Common myeloid progenitor, CD34-positive (primary cell): ENCODE measurements at regions of chr10 and their contacts with region 1.

Region 1: GRCh38 chr10:33115738-33116719 is 158.0 kb upstream of the ITGB1 start:
- DNase-seq: peak in 2 of 3 donors; percentile 48
- H3K4me3 ChIP-seq: no peak overlapping the region
- H3K27ac ChIP-seq: no peak overlapping the region
- H3K4me1 ChIP-seq: no peaks in the 10 kb centered on the region
- H3K27me3 ChIP-seq: peaks cover 0 to 5% (median 0%) of the 10 kb centered on the region in 5 experiments

Region 2: DNA sequence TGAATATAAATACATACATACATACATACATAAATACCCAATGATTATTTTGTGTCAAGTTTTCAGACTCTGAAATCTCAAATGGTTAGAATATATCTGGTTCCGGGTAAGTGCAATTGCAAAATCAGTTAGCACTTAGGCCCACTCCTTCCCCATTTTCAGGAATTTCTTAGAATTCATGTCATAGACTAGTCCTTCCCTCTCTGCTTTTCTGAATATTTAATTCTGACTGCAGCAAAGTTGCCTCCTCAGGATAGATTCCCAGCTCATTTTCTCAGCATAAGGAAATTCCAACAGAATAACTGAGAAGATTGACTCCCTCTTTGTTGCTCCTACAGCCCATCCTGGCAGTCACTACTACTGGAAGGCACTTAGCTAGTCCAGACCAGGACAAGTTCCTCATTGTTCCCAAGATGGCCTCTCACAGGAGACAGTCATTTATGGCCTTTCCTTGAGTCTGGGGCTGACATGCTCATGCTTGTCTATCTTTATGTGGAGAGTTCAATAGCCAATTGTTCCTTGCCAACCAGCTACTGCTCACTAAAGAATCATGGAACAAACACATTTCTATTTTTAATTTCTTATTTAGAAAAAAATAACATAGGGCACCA is 15.1 kb before region 1 on chr10:
- CTCF ChIA-PET with region 1: interaction called, 12 read pairs
- POLR2A ChIA-PET with region 1: no interaction called
- DNase-seq: no peak
- H3K4me3 ChIP-seq: no peak overlapping the region
- H3K27ac ChIP-seq: no peak overlapping the region
- H3K4me1 ChIP-seq: peaks cover 0 to 10% (median 2%) of the 10 kb centered on the region in 4 experiments
- H3K27me3 ChIP-seq: no peaks in the 10 kb centered on the region

Region 3: DNA sequence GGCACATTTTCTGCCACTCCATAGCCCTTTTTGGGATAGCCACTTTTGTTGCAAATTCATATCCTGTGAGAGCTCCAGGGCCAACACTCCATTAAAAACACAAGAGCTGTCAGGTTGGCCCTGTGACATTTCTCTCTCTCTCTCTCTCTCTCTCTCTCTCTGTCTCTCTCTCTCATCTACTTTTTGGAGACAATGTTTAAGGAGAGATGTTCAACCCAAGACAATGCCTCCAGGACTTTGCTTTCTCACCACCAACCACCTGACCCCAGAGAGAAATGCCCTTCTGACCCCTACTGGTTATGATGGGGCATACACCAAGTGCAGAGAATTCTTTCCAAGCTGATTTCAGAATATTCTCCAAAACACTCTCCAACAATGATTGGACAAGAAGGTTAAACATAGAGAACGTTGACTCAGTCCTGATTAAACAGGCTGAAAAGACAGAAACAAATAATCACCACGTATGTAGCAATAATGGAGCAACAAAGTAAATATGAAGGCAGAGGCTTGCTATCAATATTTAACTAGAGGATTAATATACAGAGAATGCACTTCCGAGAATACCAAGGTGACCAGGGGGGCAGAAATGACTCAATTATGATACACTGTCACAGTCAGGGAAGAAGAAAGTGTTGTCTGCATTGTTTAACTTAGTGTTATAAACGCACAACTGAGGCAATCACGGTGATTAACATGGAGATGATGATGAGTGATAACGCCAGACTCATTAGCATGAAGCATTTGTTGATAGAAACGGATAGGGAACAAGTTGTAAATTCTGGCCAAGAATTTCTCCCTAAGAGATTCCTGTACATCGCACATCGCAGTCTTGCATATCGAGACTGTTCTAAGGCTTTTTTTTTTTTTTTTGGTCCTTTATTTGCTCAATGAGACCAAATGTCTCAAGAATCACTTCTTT is 40.0 kb after region 1 on chr10:
- CTCF ChIA-PET with region 1: interaction called, 11 read pairs
- POLR2A ChIA-PET with region 1: no interaction called
- DNase-seq: peak; percentile 17 to 50 (median 47)
- H3K4me3 ChIP-seq: no peak overlapping the region
- H3K27ac ChIP-seq: no peak overlapping the region
- H3K4me1 ChIP-seq: no peaks in the 10 kb centered on the region
- H3K27me3 ChIP-seq: no peaks in the 10 kb centered on the region